ENCODE measurements at regions of chr13 and their contacts with region 1.

Region 1: GRCh38 chr13:40388617-40389016 is 277.8 kb downstream of the FOXO1 start:
- DNase-seq: peak; percentile 94
- H3K4me3 Mint-ChIP-seq: peak overlapping the region; percentile 77
- H3K27ac Mint-ChIP-seq: peak overlapping the region; percentile 92
- H3K4me1 Mint-ChIP-seq: peaks cover 51% of the 10 kb centered on the region
- H3K27me3 Mint-ChIP-seq: no peaks in the 10 kb centered on the region

Region 2: DNA sequence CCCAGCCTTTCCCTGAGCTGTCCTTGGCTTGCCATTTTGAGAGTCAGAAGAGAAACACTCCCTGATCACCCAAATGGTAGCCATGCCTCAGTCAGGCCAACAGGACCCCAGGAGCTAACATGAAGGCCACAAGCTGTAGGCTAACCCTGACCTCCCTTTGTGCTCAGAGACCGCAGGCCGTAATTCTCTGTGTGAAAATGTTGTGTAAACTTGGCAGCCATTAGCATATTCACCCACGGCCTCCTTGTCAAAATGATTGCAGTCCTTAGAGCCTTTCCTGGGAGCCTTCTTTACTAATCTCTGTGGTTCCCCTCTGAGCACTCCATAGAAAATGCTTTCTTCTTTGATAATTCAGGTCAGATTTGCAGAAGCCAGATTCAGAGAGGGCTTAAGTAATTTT is 314.3 kb before region 1 on chr13:
- CTCF ChIA-PET with region 1: no interaction called
- intact Hi-C with region 1: no loop called
- DNase-seq: no peak
- H3K4me3 Mint-ChIP-seq: no peak overlapping the region
- H3K27ac Mint-ChIP-seq: no peak overlapping the region
- H3K4me1 Mint-ChIP-seq: peaks cover 17% of the 10 kb centered on the region
- H3K27me3 Mint-ChIP-seq: no peaks in the 10 kb centered on the region

Region 3: DNA sequence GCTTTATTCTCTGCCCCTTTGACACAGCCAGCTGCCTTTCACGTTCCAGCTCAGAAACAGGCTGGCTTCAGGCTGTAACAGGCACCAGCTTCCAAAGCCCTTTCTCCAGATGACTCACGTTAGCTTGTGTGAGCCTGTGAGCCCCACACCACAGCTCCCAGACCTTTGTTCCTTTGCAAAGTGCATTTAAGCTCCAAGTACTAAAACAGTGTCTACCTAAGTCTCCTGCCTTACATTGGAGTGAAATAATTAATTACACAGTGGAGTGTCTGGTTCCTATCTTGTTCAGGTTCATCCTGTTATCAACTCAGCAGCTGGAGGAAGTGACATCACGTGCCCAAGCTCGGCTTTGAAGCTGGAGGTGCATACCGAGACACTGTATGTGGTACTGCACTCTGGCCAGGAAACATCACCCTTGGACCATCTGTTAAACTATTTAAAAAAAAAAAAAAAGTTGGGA is 197.9 kb before region 1 on chr13:
- CTCF ChIA-PET with region 1: no interaction called
- intact Hi-C with region 1: loop called (anchors 1 kb)
- DNase-seq: peak; percentile 91
- H3K4me3 Mint-ChIP-seq: peak overlapping the region; percentile 36
- H3K27ac Mint-ChIP-seq: peak overlapping the region; percentile 81
- H3K4me1 Mint-ChIP-seq: peaks cover 69% of the 10 kb centered on the region
- H3K27me3 Mint-ChIP-seq: no peaks in the 10 kb centered on the region

Region 4: GRCh38 chr13:40251343-40252032 is 137.1 kb before region 1 on chr13:
- CTCF ChIA-PET with region 1: no interaction called
- intact Hi-C with region 1: loop called (anchors 2 kb)
- DNase-seq: peak; percentile 28
- H3K4me3 Mint-ChIP-seq: no peak overlapping the region
- H3K27ac Mint-ChIP-seq: peak overlapping the region; percentile 88
- H3K4me1 Mint-ChIP-seq: peaks cover 52% of the 10 kb centered on the region
- H3K27me3 Mint-ChIP-seq: no peaks in the 10 kb centered on the region

Region 5: GRCh38 chr13:40377783-40378182 is 10.8 kb before region 1 on chr13:
- CTCF ChIA-PET with region 1: interaction called, 6 read pairs
- intact Hi-C with region 1: loop called (anchors 1 kb)
- DNase-seq: peak; percentile 38
- H3K4me3 Mint-ChIP-seq: no peak overlapping the region
- H3K27ac Mint-ChIP-seq: no peak overlapping the region
- H3K4me1 Mint-ChIP-seq: peaks cover 31% of the 10 kb centered on the region
- H3K27me3 Mint-ChIP-seq: no peaks in the 10 kb centered on the region

Region 6: DNA sequence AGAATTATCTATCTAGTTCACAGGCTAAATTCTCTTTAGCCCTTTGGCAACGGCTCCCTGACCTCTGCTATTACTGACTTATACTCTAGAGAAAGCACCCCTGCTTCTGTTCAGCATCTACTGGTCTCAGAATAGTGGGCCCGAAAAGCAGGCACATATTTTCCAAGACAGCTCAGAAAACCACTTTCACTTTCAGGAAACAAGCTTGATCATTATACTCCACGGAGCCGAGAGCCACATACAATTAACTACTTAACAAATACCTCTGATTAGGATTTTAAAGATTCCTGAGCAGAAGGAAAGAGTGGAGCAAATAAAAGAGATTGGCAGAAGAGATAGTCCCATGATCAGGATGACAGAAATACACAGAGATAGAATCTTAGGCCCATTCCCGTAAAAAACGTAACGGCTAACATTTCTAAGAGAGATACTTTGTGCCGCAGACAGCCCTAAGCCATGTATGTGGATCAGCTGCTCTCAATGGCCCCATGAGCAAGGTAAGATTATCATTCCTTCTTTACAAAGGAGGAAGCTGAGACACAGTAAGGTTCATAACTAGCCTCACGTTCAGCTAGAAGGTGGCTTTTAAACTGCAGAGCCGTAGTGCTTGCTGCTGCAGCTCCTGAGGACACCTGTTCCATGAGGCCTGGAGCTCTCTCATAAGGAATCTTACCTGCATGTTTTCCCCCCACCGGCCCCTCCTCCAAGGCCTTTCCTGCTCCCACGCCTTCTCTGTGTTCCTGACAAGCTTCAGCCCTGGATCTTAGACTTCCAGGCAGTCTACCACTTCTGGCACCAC is 50.6 kb after region 1 on chr13:
- CTCF ChIA-PET with region 1: no interaction called
- intact Hi-C with region 1: loop called (anchors 1 kb)
- DNase-seq: peak; percentile 54
- H3K4me3 Mint-ChIP-seq: peak overlapping the region; percentile 33
- H3K27ac Mint-ChIP-seq: peak overlapping the region; percentile 46
- H3K4me1 Mint-ChIP-seq: peaks cover 40% of the 10 kb centered on the region
- H3K27me3 Mint-ChIP-seq: no peaks in the 10 kb centered on the region

Region 7: GRCh38 chr13:40770934-40771618 is 382.5 kb after region 1 on chr13 and contains the start of gene MRPS31:
- CTCF ChIA-PET with region 1: no interaction called
- intact Hi-C with region 1: loop called (anchors 1 kb)
- DNase-seq: peak; percentile 95
- H3K4me3 Mint-ChIP-seq: peak within 1 kb of the TSS; percentile 98
- H3K27ac Mint-ChIP-seq: peak within 1 kb of the TSS; percentile 95
- H3K4me1 Mint-ChIP-seq: peaks cover 33% of the 10 kb centered on the region
- H3K27me3 Mint-ChIP-seq: no peaks in the 10 kb centered on the region
- total RNA-seq, gene MRPS31: 28.4 to 28.8 TPM